Activated T-helper 1 cell treated with anti-CD3 and anti-CD28 coated beads, Interleukin-12 subunit alpha, Interleukin-12 subunit beta, Interleukin-2, Interleukin-4 antibody, amounts not matched to agents 30 ng/mL and 10 ng/mL and 1 ng/mL, durations not matched to agents 14 hours and 24 hours and 36 hours (primary cell): ENCODE measurements at regions of chr1 and their contacts with region 1.

Region 1: GRCh38 chr1:70221241-70222121 is at the start of gene SRSF11:
- DNase-seq: peak; percentile 95
- H3K4me3 Mint-ChIP-seq: peak within 1 kb of the TSS; percentile 93
- H3K27ac Mint-ChIP-seq: peak within 1 kb of the TSS; percentile 99
- H3K4me1 Mint-ChIP-seq: peaks cover 43% of the 10 kb centered on the region
- H3K27me3 Mint-ChIP-seq: no peaks in the 10 kb centered on the region
- total RNA-seq, gene SRSF11: 199 and 202 TPM in 2 replicates

Region 2: DNA sequence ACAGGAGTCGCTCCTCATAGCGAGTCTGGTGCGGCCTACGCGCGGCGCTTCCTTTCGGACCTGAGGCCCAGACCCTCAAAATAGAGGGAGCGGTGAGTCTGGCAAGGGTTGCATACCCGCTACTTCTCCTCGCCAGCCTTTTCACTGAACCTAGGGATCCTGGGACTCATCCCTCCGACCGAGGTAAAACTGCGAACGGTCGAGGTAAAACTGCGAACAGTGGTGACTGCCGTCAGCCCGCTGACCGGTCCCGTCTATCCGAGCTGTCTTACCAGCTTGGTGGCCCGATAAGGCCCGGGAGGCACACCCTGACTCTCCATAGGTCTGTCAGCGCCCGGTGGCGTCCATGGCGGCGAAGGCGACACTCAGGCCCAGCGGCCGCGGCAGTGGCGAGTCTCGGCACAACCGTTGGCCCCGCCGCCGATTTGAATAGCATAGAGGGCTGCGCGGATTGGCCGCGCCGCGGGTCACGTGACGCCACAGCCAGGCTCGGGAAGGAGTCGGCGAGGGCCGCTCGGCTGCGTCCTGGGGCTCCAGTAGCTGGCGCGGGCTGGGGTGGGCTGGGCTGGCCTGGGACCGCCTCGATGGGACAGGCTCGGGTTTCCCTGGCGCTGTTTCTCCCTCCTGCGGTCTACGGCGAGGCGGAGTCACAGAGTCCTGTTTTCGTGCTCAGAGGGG is 1724.7 kb before region 1 on chr1 and contains the start of gene DEPDC1:
- intact Hi-C with region 1: loop called (anchors 5 kb)
- DNase-seq: peak; percentile 84
- H3K4me3 Mint-ChIP-seq: peak within 1 kb of the TSS; percentile 92
- H3K27ac Mint-ChIP-seq: peak within 1 kb of the TSS; percentile 81
- H3K4me1 Mint-ChIP-seq: peaks cover 27% of the 10 kb centered on the region
- H3K27me3 Mint-ChIP-seq: peaks cover 17% of the 10 kb centered on the region
- total RNA-seq, gene DEPDC1: 10.0 and 11.3 TPM in 2 replicates

Region 3: DNA sequence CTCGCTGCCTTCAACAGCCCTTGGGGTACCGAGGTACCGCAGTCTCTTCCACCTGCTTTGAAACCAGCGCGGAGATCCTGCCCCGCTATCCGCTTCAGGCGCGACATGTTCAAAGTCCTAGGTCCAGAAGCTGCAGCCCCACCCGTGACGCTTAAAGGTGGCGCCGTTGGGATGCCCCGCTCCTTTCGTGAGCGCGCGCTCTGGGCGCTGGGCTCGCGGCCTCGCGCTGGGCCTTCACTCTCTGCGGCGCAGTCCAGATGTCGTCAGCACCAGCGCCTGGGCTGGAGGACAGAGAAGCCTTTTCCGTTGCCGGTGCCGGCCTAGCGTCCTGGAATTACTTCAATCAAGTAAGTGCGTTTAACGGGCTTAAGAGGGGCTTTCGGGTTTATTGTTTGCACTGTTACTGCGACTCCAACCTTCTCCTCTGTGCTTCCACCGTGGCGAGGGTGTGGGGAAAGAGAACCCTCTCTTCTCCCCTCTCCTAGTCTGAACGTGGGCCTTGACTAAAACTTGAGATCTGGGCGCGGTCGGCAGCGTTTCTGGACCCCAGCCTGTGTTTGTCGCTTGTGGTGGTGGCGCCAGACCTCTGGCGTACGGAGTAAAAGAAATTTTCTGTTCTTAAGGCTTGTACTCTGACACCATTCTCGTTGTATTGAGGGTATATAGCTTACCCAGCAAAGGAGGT is 15.9 kb before region 1 on chr1 and contains the start of gene LRRC40:
- intact Hi-C with region 1: loop called (anchors 1 kb)
- DNase-seq: peak; percentile 96
- H3K4me3 Mint-ChIP-seq: peak within 1 kb of the TSS; percentile 100
- H3K27ac Mint-ChIP-seq: peak within 1 kb of the TSS; percentile 96
- H3K4me1 Mint-ChIP-seq: peaks cover 64% of the 10 kb centered on the region
- H3K27me3 Mint-ChIP-seq: no peaks in the 10 kb centered on the region
- total RNA-seq, gene LRRC40: 22.6 and 23.4 TPM in 2 replicates

Region 4: DNA sequence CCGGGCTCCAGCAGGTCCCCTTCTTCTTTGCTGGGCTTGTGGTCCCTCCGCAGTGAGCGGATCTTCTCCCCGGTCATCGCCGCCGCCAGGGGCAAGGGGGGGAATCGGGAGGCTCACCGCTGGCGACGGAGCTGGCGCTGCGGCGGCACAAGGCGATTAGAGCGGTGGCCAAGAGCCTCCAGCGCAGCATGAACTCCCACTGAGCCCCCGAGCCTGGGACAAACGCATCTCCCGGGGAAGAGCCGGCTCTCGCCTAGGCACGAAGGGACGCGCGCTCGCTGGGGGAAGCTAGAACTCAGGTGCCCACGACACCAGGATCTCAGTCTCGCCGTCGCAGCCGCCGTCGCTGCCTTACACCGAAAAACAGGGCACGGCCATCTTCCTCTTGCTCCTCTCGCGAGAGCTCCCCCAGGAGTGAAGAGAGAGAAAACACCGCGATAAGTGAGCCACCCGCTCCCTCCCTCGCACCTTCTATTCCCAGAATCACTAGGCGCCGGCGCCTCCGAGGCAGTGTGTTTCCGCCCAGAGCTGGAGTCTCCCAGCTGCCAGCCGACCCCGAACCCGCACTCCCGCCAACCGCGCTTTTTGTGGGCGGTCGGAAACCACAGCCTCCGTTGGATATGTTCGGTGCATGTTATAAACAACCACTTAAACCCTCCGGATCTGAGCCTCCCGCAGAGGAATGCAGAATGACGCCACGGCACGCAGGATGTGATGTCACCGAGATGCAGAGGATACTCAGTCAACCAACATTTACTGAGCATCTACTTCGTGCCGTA is 133.0 kb after region 1 on chr1 and contains the start of gene ANKRD13C:
- intact Hi-C with region 1: loop called (anchors 1 kb)
- DNase-seq: peak; percentile 88
- H3K4me3 Mint-ChIP-seq: peak within 1 kb of the TSS; percentile 89
- H3K27ac Mint-ChIP-seq: peak within 1 kb of the TSS; percentile 95
- H3K4me1 Mint-ChIP-seq: peaks cover 27% of the 10 kb centered on the region
- H3K27me3 Mint-ChIP-seq: no peaks in the 10 kb centered on the region
- total RNA-seq, gene ANKRD13C: 25.5 and 26.5 TPM in 2 replicates

Region 5: GRCh38 chr1:71080739-71081696 is 859.5 kb after region 1 on chr1 and contains the start of gene ZRANB2:
- intact Hi-C with region 1: loop called (anchors 1 kb)
- DNase-seq: peak; percentile 86
- H3K4me3 Mint-ChIP-seq: peak within 1 kb of the TSS; percentile 100
- H3K27ac Mint-ChIP-seq: peak within 1 kb of the TSS; percentile 98
- H3K4me1 Mint-ChIP-seq: peaks cover 28% of the 10 kb centered on the region
- H3K27me3 Mint-ChIP-seq: peaks cover 10% of the 10 kb centered on the region
- total RNA-seq, gene ZRANB2: 149 and 152 TPM in 2 replicates